AG04450 (cell line): ENCODE measurements at regions of chr11 and their contacts with region 1.

Region 1: DNA sequence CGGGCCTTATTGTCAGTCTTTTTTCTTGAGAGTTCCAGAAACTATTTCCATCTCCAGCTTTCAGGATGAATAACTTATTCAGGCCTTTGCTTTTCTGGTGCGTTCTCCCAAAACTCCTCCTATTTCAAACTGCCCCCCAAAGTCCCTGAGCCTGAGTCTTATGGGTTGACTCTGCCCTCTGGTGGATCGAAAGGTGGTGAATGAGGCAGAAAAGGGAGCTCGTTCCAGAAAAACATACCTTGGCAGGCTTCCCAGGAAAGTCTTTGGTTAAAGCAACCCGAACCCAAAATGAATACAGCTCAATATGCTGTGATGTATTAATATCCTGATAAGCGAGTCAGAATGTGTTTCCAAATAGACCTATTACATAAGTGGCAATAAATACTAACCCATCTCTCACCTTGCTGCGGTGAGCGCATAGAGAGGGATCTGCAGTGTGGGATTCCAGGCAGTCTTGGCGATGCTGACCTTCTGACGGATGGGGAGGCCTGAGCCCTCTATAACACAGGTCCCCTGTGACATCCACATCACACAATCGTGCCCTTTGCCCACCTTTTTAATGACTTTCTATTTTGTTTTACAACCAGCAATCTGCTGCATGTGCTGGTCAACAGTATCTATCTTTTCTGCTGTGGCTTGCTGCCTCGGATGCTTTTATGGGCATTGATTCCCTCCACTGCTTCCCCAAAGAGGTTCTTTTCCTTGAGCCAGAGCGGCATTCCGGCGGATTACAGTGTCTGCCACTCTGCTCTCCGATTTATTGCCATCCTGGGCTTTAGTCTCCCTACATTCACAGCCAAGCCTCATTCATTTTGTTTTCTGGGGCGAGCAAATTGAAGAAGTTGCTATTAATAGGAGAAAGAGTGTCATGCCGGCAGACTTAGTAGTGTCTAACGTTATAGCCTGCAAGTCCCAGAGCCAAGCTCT is 756.8 kb downstream of the NTM start:
- DNase-seq: peak; percentile 84
- H3K4me3 ChIP-seq: peak overlapping the region; percentile 45
- H3K27ac ChIP-seq: peak overlapping the region; percentile 47
- H3K27me3 ChIP-seq: no peaks in the 10 kb centered on the region
- CTCF ChIP-seq: peak; percentile 90

Region 2: DNA sequence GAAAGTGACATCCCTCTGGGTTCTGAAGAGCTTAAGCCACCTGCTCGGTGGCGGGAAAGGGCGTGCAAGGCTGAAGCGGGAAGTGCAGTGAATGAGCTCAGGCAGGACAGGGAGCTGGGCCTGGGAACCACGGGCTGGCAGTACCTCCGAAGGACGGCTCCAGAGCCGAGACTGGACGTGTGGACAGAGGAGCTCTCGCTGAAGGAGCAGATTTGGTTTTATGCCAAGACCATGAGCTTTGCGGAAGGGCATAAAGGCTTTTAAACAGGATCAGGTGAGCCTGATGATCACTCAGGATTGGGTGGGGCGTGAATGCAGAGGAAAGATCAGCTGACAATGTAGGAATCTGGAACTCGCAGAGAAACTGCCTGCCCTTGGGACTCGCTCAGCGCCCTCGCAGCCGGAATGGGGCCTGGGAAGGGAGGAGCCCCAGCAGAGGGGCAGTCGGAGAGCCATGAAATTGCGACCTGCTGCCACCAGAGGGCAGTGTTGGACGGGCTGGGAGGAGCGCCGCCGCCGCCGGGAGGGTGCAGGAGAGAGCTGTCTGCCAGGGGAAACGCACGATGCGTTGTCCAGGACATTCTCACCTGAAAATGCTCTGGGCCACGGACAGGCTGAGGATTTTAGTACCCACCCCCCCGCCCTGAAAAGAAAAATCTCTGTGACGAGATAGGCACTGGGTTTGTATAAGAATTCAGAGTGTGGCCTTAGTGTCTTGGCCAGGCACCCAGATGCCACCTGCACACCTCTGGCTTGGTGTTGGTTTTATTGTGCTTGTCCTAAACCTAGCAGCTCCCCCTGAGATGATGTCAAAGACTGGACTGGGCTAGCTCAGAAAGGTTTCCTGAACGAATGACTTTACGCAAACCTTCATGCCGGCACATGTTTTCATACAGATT is 432.5 kb before region 1 on chr11:
- CTCF ChIA-PET with region 1: interaction called, 33 read pairs
- POLR2A ChIA-PET with region 1: no interaction called
- DNase-seq: peak; percentile 44
- H3K4me3 ChIP-seq: peak overlapping the region; percentile 17; the same call in 1 of the 2 replicates
- H3K27ac ChIP-seq: no peak overlapping the region
- H3K27me3 ChIP-seq: no peaks in the 10 kb centered on the region
- CTCF ChIP-seq: peak; percentile 95

Region 3: DNA sequence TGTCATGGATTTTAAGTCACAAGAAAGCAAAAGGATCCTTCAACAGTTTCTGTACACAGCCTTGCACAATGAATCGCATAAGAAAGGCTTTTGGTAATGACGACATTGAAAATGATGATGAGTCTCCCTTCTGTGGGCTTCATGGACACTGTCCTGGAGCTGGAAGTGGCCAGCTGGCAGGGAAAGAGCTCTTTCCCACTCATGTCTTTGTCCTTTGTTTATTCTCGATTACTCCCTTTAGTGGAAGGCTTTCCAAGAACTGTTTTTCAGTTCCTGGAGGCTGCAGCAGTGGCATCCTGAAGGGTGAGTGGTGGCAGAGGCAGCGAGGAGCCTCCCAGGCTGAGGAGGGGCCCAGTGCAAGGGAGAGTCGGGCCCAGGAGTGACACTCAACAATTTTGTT is 251.6 kb before region 1 on chr11:
- CTCF ChIA-PET with region 1: interaction called, 250 read pairs
- POLR2A ChIA-PET with region 1: no interaction called
- DNase-seq: no peak
- H3K4me3 ChIP-seq: no peak overlapping the region
- H3K27ac ChIP-seq: no peak overlapping the region
- H3K27me3 ChIP-seq: no peaks in the 10 kb centered on the region
- CTCF ChIP-seq: no peak

Region 4: GRCh38 chr11:131910523-131911387 is 216.5 kb before region 1 on chr11:
- CTCF ChIA-PET with region 1: interaction called, 134 read pairs
- POLR2A ChIA-PET with region 1: interaction called, 12 read pairs
- DNase-seq: no peak
- H3K4me3 ChIP-seq: peak overlapping the region; percentile 88
- H3K27ac ChIP-seq: peak overlapping the region; percentile 25
- H3K27me3 ChIP-seq: no peaks in the 10 kb centered on the region
- CTCF ChIP-seq: no peak; the same call in 1 of the 2 replicates

Region 5: DNA sequence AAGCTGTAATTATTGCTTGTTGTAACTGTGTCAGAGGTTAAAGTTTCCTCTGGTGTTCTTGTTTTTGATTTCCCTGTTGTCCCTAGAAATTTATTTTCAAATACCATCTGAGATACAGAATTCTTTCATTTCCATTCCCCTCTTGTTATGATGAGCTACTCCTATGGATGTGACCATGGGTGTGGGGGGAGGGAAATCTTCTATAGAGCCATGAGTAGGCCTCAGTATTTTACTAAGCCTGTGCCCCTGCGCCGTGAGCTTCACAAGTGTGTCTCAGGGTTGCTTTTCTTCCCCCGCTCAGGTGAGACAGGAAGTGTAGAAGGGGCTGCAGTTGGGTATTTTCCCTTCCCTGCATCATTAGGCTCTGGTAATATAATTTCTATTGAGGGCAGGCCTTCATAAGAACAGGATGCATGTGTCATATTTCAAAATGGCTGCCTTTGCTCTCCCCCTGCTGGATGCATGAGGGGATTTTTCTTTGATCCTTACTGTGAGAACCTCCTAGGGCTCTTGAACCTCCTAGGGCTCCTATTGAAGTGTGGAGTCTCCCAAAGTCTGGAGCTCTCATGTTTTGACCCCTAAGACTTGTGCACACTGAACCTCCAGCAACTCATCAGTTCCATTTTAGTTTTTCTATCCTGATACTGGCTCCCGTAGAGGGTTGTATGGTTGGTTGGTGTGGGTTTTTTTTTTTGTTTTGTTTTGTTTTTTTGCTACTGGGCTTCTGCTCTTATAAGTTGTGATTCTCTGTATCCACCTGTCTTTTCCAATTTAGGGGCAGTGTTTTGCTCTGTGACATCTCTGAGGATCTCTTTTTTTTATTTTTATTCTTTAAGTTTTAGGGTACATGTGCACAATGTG is 98.6 kb before region 1 on chr11:
- CTCF ChIA-PET with region 1: interaction called, 27 read pairs
- POLR2A ChIA-PET with region 1: no interaction called
- DNase-seq: no peak
- H3K4me3 ChIP-seq: no peak overlapping the region
- H3K27ac ChIP-seq: no peak overlapping the region
- H3K27me3 ChIP-seq: no peaks in the 10 kb centered on the region
- CTCF ChIP-seq: peak; percentile 75

Region 6: DNA sequence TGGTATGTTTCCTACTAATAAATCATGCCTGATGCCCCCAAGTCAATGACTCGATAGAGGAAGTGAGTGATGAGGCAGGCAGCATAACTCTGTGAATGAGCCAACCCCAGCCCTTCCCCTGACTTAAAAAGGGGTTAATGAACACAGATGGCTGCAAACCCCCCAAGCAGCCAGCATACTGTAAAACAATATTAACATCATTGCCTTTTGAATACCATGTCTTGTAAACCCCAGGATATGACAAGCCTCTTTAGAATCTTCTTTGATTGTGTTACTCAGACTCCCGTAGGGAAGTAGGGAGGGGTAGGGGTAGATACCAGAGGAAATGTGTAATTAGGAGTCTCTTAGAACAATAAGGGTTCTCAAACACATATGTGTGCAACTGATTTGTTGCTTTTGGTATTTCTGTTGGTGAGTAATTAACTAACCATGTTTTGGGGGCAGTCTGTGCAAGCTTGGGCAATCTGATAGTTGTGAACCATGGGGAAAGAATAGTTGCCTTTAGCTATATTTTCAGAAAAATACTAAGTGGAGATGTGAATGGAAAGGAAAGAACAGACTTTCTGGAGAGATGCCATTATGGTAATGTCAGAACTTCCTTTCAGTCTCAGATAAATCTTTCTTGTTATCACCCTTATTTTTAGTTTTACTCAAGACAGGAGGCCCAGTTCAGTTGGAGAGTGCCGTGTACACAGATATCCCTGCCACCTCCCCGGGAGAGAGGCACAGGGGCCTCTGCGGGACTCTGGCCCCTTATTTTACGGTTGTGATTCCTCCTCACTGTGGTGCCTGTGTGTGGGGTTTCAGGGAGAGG is 55.0 kb before region 1 on chr11:
- CTCF ChIA-PET with region 1: interaction called, 15 read pairs
- POLR2A ChIA-PET with region 1: no interaction called
- DNase-seq: peak; percentile 89
- H3K4me3 ChIP-seq: no peak overlapping the region; the same call in 1 of the 2 replicates
- H3K27ac ChIP-seq: peak overlapping the region; percentile 99
- H3K27me3 ChIP-seq: no peaks in the 10 kb centered on the region
- CTCF ChIP-seq: no peak

Region 7: GRCh38 chr11:132137981-132138313 is 10.7 kb after region 1 on chr11:
- CTCF ChIA-PET with region 1: interaction called, 13 read pairs
- POLR2A ChIA-PET with region 1: no interaction called
- DNase-seq: no peak
- H3K4me3 ChIP-seq: no peak overlapping the region
- H3K27ac ChIP-seq: no peak overlapping the region
- H3K27me3 ChIP-seq: no peaks in the 10 kb centered on the region
- CTCF ChIP-seq: no peak

Region 8: GRCh38 chr11:132205496-132205895 is 78.3 kb after region 1 on chr11:
- CTCF ChIA-PET with region 1: no interaction called
- POLR2A ChIA-PET with region 1: no interaction called
- DNase-seq: no peak
- H3K4me3 ChIP-seq: no peak overlapping the region
- H3K27ac ChIP-seq: no peak overlapping the region
- H3K27me3 ChIP-seq: no peaks in the 10 kb centered on the region
- CTCF ChIP-seq: no peak